Upper lobe of right lung (tissue), 1 donor: ENCODE measurements at regions of chr17 and their contacts with region 1.

Region 1: GRCh38 chr17:4304417-4305027 is 40.7 kb upstream of the ANKFY1 start:
- DNase-seq: no peak
- ATAC-seq: peak; percentile 85
- H3K4me3 ChIP-seq: no peak overlapping the region
- H3K27ac ChIP-seq: no peak overlapping the region
- H3K4me1 ChIP-seq: peaks cover 6% of the 10 kb centered on the region
- H3K27me3 ChIP-seq: no peaks in the 10 kb centered on the region
- CTCF ChIP-seq: peak; percentile 85

Region 2: DNA sequence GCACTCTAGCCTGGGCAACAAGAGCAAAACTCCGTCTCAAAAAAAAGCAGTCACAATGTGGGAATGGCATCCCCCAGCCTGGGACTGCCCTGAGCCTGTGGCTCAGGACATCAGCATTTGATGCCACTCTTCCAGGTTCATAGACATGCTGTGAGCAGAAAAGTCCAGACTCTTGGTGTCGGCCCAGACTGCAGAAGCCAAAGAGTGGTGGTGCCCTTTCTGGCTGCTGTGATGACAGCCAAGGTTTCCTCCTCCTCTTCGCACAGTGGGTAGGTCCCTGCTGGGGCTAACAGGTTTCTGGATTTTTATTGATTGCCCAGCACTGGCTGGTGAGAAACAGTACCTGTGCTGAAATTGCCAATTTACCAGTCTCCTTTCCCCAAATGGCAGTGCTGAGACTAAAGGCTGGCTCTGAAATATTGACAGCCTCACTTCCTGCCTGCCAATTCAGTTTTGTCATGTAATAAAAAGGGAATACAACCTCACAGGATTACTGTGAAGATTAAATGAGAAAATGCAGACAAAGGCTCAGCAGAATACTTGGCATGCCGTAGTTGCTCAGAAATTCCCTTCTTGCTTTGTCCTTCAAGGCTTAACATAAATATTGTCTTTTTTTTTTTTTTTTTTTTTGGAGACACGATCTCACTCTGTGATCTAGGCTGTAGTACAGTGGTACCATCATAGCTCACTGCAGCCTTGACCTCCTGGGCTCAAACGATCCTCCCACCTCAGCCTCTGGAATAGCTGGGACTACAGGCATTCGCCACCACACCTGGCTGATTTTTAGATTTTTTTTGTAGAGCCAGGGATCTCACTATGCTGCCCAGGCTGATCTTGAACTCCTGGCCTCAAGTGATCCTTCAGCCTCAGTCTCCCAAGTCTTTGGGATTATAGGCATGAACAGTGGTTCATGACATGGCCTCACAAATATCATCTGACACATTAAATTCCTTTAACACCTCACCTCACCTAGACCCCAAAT is 77.5 kb after region 1 on chr17:
- intact Hi-C with region 1: no loop called
- DNase-seq: no peak
- ATAC-seq: no peak
- H3K4me3 ChIP-seq: no peak overlapping the region
- H3K27ac ChIP-seq: no peak overlapping the region
- H3K4me1 ChIP-seq: no peaks in the 10 kb centered on the region
- H3K27me3 ChIP-seq: no peaks in the 10 kb centered on the region
- CTCF ChIP-seq: no peak

Region 3: GRCh38 chr17:4407851-4408250 is 103.3 kb after region 1 on chr17:
- intact Hi-C with region 1: loop called (anchors 5 kb)
- DNase-seq: no peak
- ATAC-seq: no peak
- H3K4me3 ChIP-seq: no peak overlapping the region
- H3K27ac ChIP-seq: no peak overlapping the region
- H3K4me1 ChIP-seq: no peaks in the 10 kb centered on the region
- H3K27me3 ChIP-seq: no peaks in the 10 kb centered on the region
- CTCF ChIP-seq: no peak